Activated CD4-positive, alpha-beta T cell treated with anti-CD3 and anti-CD28 coated beads for 36 hours (primary cell): ENCODE measurements at regions of chr1 and their contacts with region 1.

Region 1: DNA sequence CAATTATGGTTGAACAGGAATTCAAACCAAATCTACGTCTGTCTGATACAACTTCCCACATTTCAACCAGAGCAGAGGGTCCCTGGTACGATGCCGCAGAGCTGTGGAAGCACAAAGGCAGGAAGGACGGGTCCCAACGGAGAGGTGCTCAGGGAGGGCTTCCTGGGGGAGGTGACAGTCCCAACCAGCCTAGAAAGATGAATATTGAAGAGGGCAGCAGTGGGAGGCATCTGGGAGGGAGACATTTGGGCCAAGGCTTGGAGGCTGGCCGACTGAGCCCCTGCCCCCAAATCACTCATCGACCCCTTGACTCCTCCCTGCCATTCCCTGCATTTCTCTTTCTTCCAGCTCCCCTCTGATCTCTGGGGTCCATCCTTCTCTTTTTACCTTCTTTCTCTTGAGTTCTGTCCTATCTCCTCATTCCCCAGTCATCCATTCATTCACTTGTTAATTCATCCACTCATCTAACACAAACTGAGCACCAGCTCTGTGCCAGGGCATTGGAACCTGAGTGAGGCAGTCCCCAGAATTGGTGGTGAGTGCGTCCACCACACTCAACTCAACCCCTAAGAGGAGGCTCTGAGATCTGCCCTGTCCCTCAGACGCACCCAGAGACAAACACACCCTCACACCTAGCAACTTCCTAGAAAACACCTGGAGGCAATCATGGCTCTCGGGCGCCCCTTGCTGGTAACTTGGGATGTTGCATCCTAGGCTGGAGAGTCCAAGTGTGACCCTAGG is 13.2 kb upstream of the CELA3B start:
- DNase-seq: peak; percentile 91
- ATAC-seq: peak; percentile 98
- H3K4me3 Mint-ChIP-seq: no peak overlapping the region
- H3K27ac Mint-ChIP-seq: peak overlapping the region; percentile 73
- H3K4me1 Mint-ChIP-seq: peaks cover 8% of the 10 kb centered on the region
- H3K27me3 Mint-ChIP-seq: no peaks in the 10 kb centered on the region

Region 2: GRCh38 chr1:21508580-21509350 is 454.9 kb before region 1 on chr1:
- CTCF ChIA-PET with region 1: no interaction called
- POLR2A ChIA-PET with region 1: no interaction called
- intact Hi-C with region 1: loop called (anchors 1 to 10 kb)
- DNase-seq: peak; percentile 86
- ATAC-seq: peak; percentile 97
- H3K4me3 Mint-ChIP-seq: peak overlapping the region; percentile 25
- H3K27ac Mint-ChIP-seq: no peak overlapping the region
- H3K4me1 Mint-ChIP-seq: peaks cover 4% of the 10 kb centered on the region
- H3K27me3 Mint-ChIP-seq: peaks cover 38% of the 10 kb centered on the region

Region 3: DNA sequence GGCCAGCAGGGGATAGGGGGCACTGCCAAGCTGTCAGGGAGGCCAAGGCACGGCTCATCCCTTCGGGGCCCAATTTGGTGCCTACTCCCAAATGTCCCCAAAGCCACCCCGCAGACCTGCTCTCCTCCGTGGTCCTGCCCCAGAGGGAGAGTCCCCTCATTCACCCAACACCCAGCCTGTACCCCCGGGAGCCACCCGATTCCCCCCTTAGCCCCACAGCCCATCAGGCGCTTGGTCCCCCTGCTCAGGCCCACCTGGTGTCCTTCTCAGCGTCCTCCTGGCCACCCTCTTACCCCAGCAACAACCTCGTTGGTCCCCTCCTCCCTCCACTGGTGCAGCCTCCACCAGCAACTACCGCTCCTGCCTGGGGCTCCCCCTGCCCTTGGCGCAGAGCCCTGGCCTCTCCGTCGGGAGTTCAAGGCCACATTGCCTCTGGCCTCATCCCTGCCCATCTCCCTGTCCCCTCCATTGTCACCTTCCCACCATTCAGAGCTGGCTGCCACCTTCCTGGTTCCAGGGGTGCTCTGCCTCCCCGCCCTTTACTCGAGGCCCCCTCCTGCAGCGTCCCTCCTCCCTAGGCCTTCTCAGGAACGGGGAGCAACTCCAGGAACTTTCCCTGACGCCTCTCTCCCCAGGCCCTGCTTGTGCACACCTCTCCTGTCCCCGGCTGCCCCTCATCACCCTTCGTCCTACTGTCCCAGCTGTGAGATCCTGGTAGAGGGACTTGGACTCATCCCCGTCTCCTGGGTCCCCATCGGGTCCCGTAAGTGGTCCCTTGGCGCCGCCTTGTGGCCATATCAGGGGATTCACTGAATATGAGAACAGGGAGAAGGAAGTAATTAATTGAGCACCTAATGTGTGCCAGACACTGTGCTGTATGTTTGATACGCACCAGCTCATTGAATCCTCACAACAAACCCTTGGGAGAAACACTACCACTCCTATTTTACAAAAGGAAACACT is 368.4 kb before region 1 on chr1:
- CTCF ChIA-PET with region 1: no interaction called
- POLR2A ChIA-PET with region 1: no interaction called
- intact Hi-C with region 1: loop called in 1 of 2 experiments (anchors 1 kb)
- DNase-seq: peak; percentile 85
- ATAC-seq: peak; percentile 71
- H3K4me3 Mint-ChIP-seq: no peak overlapping the region
- H3K27ac Mint-ChIP-seq: no peak overlapping the region
- H3K4me1 Mint-ChIP-seq: peaks cover 5% of the 10 kb centered on the region
- H3K27me3 Mint-ChIP-seq: peaks cover 2% of the 10 kb centered on the region

Region 4: DNA sequence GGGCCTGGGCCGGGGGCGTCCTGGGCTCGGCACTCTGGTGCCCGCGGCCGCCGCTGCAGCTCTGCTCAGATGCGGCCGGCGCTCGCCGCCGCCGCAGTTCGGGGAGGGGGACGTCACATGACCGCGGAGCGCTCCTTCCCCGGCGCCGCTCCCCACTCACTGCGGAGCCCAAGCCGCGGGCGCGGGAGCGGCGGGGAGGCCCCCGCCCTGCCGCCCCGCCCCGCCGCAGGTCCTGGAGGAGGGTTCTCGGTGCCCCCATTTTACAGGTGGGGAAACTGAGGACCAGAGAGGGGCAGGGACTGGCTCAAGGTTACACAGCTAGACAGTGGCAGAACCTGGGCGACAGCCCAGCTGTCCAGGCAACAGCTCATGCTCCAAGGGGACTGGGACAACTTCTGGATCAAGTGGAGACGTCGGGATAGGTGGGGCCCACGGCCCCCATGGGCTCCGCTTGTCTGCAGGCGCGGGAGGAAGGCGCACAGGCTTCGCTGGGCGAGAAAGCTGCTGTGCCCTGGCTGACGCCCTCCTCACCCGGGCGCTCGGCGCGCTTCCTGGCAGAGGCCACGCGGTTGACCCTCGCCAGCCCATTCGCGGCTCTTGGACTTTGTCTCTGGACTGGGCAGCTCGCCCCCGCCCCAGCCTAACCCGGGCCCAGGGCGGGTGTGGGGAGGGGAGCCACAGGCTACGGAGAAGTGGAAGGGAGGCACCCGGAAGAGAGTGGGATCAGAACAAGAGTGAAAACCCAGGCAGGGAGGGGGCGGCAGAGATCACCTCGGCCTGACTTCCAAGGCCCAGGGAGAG is 294.2 kb before region 1 on chr1 and contains the start of gene RAP1GAP:
- CTCF ChIA-PET with region 1: no interaction called
- POLR2A ChIA-PET with region 1: no interaction called
- intact Hi-C with region 1: loop called in 1 of 2 experiments (anchors 10 kb)
- DNase-seq: peak; percentile 67
- ATAC-seq: peak; percentile 64
- H3K4me3 Mint-ChIP-seq: peak within 1 kb of the TSS; percentile 61
- H3K27ac Mint-ChIP-seq: no peak within 1 kb of the TSS
- H3K4me1 Mint-ChIP-seq: peaks cover 29% of the 10 kb centered on the region
- H3K27me3 Mint-ChIP-seq: peaks cover 19% of the 10 kb centered on the region
- total RNA-seq, gene RAP1GAP: 2.1 to 2.5 TPM

Region 5: GRCh38 chr1:21703318-21703963 is 260.2 kb before region 1 on chr1:
- CTCF ChIA-PET with region 1: interaction called, 3 read pairs
- POLR2A ChIA-PET with region 1: no interaction called
- intact Hi-C with region 1: loop called (anchors 5 to 10 kb)
- DNase-seq: no peak
- ATAC-seq: no peak
- H3K4me3 Mint-ChIP-seq: no peak overlapping the region
- H3K27ac Mint-ChIP-seq: no peak overlapping the region
- H3K4me1 Mint-ChIP-seq: peaks cover 9% of the 10 kb centered on the region
- H3K27me3 Mint-ChIP-seq: no peaks in the 10 kb centered on the region

Region 6: GRCh38 chr1:21818656-21819055 is 145.0 kb before region 1 on chr1:
- CTCF ChIA-PET with region 1: no interaction called
- POLR2A ChIA-PET with region 1: no interaction called
- intact Hi-C with region 1: loop called in 1 of 2 experiments (anchors 5 kb)
- DNase-seq: peak; percentile 69
- ATAC-seq: peak; percentile 67
- H3K4me3 Mint-ChIP-seq: no peak overlapping the region
- H3K27ac Mint-ChIP-seq: no peak overlapping the region
- H3K4me1 Mint-ChIP-seq: peaks cover 6% of the 10 kb centered on the region
- H3K27me3 Mint-ChIP-seq: peaks cover 6% of the 10 kb centered on the region